Endothelial cell of umbilical vein (primary cell): ENCODE measurements at regions of chr7 and their contacts with region 1.

Region 1: GRCh38 chr7:149809215-149809614 is 29.0 kb upstream of the ZNF862 start:
- DNase-seq: no peak
- H3K4me3 ChIP-seq: no peak overlapping the region
- H3K27ac ChIP-seq: no peak overlapping the region
- H3K4me1 ChIP-seq: no peaks in the 10 kb centered on the region
- H3K27me3 ChIP-seq: no peaks in the 10 kb centered on the region
- CTCF ChIP-seq: no peak
- POLR2A ChIP-seq: no peak

Region 2: DNA sequence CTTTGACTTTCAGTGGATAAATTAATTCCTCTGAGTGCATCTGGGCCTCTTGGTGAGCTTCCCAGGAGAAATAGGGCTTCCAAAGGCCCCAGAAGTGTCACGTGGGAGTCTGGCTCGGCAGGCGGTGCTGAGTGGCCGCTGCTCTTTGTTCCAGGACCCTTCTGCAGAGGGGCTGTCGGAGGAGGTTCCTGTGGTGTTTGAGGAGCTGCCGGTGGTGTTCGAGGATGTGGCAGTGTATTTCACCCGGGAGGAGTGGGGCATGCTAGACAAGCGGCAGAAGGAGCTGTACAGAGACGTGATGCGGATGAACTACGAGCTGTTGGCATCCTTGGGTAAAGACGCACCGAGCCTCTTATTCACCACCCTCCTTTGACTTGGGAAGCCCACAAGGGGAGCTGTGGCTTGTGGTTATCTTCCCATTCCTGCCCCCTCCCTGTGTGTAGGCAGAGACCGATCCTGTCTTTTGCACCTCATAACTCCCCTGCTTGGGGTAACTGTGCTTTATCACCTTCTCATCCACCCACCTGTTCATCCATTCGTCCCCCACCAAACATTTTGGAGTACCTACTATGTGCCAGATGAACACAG is 40.9 kb after region 1 on chr7:
- CTCF ChIA-PET with region 1: interaction called, 12 read pairs
- POLR2A ChIA-PET with region 1: no interaction called
- dilution Hi-C with region 1: no loop called
- intact Hi-C with region 1: no loop called
- DNase-seq: no peak
- H3K4me3 ChIP-seq: no peak overlapping the region
- H3K27ac ChIP-seq: no peak overlapping the region
- H3K4me1 ChIP-seq: no peaks in the 10 kb centered on the region
- H3K27me3 ChIP-seq: no peaks in the 10 kb centered on the region
- CTCF ChIP-seq: no peak
- POLR2A ChIP-seq: no peak

Region 3: GRCh38 chr7:149883452-149883861 is 74.2 kb after region 1 on chr7:
- CTCF ChIA-PET with region 1: interaction called, 10 read pairs
- POLR2A ChIA-PET with region 1: no interaction called
- dilution Hi-C with region 1: no loop called
- intact Hi-C with region 1: no loop called
- DNase-seq: peak; percentile 36
- H3K4me3 ChIP-seq: no peak overlapping the region
- H3K27ac ChIP-seq: no peak overlapping the region
- H3K4me1 ChIP-seq: no peaks in the 10 kb centered on the region
- H3K27me3 ChIP-seq: no peaks in the 10 kb centered on the region
- CTCF ChIP-seq: peak; percentile 62 to 73
- POLR2A ChIP-seq: no peak

Region 4: DNA sequence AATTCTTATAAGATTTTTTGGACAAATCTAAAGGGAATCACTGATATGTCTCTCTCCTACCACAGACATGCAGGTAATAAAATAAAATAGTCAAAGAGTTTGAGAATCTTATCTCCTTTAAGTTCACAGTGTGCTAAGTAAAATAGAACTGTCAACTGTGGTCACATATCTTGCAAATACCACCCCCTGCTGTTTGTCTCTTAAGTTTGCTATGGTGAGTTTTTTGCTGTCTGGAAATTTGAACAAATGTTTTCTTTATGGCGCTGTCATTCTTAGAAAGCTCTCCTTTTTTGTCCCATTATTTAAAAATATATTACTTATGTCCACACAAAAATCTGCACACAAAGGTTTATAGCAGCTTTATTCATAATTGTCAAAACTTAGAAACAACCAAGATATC is 947.6 kb after region 1 on chr7:
- CTCF ChIA-PET with region 1: no interaction called
- POLR2A ChIA-PET with region 1: no interaction called
- dilution Hi-C with region 1: no loop called
- intact Hi-C with region 1: no loop called
- DNase-seq: peak; percentile 81
- H3K4me3 ChIP-seq: no peak overlapping the region
- H3K27ac ChIP-seq: no peak overlapping the region
- H3K4me1 ChIP-seq: peaks cover 22% of the 10 kb centered on the region
- H3K27me3 ChIP-seq: no peaks in the 10 kb centered on the region
- CTCF ChIP-seq: peak; percentile 32 to 38
- POLR2A ChIP-seq: no peak